ENCODE measurements at regions of chr21 and their contacts with region 1.

Region 1: GRCh38 chr21:45281411-45282282 is 6.0 kb downstream of the POFUT2 start:
- DNase-seq: peak in 7 of 10 donors; percentile 42 to 73 (median 62)
- H3K4me3 ChIP-seq: no peak overlapping the region
- H3K27ac ChIP-seq: peak overlapping the region in 24 of 59 donors; percentile 2 to 69 (median 45)
- H3K27me3 ChIP-seq: no peaks in the 10 kb centered on the region
- CTCF ChIP-seq: peak in 3 of 56 donors; percentile 26 to 31 (median 29)

Region 2: GRCh38 chr21:44773287-44773966 is 508.2 kb before region 1 on chr21:
- intact Hi-C with region 1: no loop called
- DNase-seq: peak in 2 of 10 donors; percentile 34 to 42
- H3K4me3 ChIP-seq: no peak overlapping the region
- H3K27ac ChIP-seq: no peak overlapping the region
- H3K27me3 ChIP-seq: no peaks in the 10 kb centered on the region
- CTCF ChIP-seq: no peak

Region 3: GRCh38 chr21:45140346-45140940 is 141.2 kb before region 1 on chr21:
- intact Hi-C with region 1: loop called (anchors 5 to 10 kb)
- DNase-seq: peak; percentile 47 to 84 (median 76)
- H3K4me3 ChIP-seq: no peak overlapping the region
- H3K27ac ChIP-seq: no peak overlapping the region
- H3K27me3 ChIP-seq: no peaks in the 10 kb centered on the region
- CTCF ChIP-seq: peak in 55 of 56 donors; percentile 24 to 87 (median 77)

Region 4: GRCh38 chr21:45570826-45571601 is 289.4 kb after region 1 on chr21:
- intact Hi-C with region 1: no loop called
- DNase-seq: peak in 2 of 10 donors; percentile 22 to 67
- H3K4me3 ChIP-seq: no peak overlapping the region
- H3K27ac ChIP-seq: peak overlapping the region in 11 of 59 donors; percentile 16 to 81 (median 41)
- H3K27me3 ChIP-seq: peaks cover 0 to 23% (median 0%) of the 10 kb centered on the region in 45 donors
- CTCF ChIP-seq: no peak

Measured in dorsolateral prefrontal cortex (tissue), 120 donors.